Naive thymus-derived CD4-positive, alpha-beta T cell (primary cell): ENCODE measurements at regions of chr9 and their contacts with region 1.

Region 1: DNA sequence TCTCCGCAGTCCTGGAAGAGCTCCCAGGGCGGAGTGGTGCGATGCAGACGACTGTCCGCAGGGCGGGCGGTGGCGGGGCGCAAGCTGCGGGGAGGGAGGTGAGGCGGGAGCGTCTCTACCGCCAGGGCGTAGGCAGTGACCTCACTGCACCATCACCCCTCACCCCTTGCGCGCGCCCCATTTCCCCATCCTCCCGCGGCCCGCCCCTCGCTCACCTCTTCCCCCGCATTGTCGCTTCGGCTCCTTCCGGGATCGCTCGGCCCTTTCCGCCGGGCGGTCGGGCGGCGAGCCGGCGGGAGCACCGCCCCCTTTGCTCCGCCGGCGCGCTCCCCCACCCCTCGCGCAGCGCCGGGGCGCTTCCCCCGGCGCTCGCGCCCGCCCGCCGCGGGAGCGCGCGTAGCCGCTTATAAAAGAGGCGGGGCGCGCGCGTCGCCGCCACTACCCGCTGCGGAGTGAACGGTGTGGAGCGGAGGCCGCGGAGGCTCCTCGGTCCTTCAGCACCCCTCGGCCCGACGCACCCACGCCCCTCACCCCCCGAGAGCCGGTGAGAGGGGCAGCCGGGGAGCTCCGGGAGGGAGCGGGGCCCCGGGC is at the start of gene SPTAN1:
- DNase-seq: peak; percentile 92 to 98 (median 96)
- ATAC-seq: peak; percentile 94
- H3K4me3 ChIP-seq: peak within 1 kb of the TSS; percentile 84
- H3K4me3 Mint-ChIP-seq: peak within 1 kb of the TSS in 7 of 10 donors; percentile 85 to 94 (median 92)
- H3K27ac ChIP-seq: peak within 1 kb of the TSS; percentile 94
- H3K27ac Mint-ChIP-seq: peak within 1 kb of the TSS; percentile 92 to 98 (median 97)
- H3K4me1 ChIP-seq: peaks cover 44 to 45% of the 10 kb centered on the region in 2 donors
- H3K4me1 Mint-ChIP-seq: peaks cover 15 to 38% (median 34%) of the 10 kb centered on the region in 7 donors
- H3K27me3 ChIP-seq: no peaks in the 10 kb centered on the region
- H3K27me3 Mint-ChIP-seq: no peaks in the 10 kb centered on the region
- total RNA-seq, gene SPTAN1: 336 to 433 (median 375) TPM

Region 2: DNA sequence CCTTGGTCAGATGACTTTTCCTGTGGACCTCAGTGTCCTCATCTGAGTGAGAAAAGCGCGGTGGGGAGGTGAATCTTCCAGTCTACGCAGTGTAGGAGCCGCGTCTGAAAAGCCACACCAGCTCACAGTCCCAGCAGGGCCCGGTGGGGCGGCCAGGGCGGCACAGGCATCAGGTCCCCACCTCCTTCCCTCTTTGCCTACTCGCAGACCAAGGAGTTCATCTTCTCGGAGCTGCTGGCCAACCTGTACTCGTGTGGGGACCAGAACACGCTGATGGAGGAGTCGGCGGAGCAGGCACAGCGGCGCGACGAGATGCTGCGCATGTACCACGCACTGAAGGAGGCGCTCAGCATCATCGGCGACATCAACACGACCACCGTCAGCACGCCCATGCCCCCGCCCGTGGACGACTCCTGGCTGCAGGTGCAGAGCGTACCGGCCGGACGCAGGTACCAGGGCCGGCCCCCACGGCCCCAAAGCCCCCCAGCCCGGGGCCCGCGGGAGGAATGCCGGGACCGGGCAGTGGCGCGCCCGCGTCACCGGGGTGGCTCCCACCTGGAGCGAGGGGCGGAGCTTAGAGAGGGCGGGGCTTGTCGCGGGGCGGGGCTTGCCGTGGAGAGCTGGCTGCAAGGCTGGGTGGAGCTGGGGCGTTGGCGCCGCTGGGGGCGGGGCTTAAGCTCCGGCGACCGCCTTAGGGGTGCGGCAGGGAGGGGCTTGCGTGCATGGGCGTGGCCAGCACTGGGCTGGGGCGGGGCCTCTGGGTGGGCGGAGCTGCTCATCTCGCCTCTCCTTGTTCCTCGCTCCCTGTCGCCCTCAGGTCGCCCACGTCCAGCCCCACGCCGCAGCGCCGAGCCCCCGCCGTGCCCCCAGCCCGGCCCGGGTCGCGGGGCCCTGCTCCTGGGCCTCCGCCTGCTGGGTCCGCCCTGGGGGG is 302.1 kb before region 1 on chr9:
- CTCF ChIA-PET with region 1: no interaction called
- POLR2A ChIA-PET with region 1: interaction called, 6 read pairs
- intact Hi-C with region 1: loop called in 1 of 2 experiments (anchors 5 kb)
- DNase-seq: peak; percentile 96 to 100 (median 98)
- ATAC-seq: peak; percentile 98
- H3K4me3 ChIP-seq: peak overlapping the region; percentile 83
- H3K4me3 Mint-ChIP-seq: peak overlapping the region; percentile 79 to 93 (median 88)
- H3K27ac ChIP-seq: peak overlapping the region; percentile 72
- H3K27ac Mint-ChIP-seq: peak overlapping the region; percentile 60 to 97 (median 95)
- H3K4me1 ChIP-seq: peaks cover 7 to 9% of the 10 kb centered on the region in 2 donors
- H3K4me1 Mint-ChIP-seq: peaks cover 7 to 28% (median 17%) of the 10 kb centered on the region in 7 donors
- H3K27me3 ChIP-seq: no peaks in the 10 kb centered on the region
- H3K27me3 Mint-ChIP-seq: peaks cover 0 to 39% (median 6%) of the 10 kb centered on the region in 5 donors

Region 3: DNA sequence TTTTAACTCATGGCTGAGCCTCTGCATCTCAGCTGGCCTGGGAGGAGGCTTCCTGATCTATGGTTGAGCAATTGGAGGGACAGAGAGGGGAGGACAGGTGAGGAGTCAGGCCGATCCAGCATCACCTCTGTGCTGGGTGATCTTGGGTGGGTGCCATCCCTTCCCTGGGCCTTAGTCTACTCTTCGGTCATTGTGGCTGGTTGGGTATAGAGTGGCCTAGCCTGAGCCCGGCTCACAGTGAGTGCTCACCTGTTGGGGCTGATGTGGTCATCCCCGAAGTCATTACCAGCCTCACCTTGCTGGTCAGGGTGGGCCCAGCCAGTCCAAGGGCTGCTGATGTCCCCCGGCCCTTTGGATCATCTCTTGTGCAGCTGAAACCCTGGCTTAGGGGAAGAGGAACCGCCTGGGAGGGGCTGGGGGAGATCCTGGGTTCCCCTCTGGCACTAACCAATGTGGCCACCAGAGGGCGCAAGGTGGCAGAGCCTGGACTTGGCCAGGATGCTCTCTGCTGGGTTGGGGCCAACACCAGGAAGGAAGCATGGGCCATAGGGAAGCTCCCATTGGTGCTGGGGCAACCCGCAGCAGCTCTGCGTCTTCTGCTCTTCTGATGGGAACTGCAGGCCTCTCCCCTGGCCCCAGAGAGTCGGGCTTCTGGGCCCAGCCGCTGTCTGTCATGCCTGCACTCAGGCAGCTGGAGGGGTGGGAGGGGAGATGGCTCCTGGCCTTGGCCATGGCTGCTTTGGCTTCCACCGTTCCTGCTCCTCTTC is 113.7 kb before region 1 on chr9:
- CTCF ChIA-PET with region 1: no interaction called
- POLR2A ChIA-PET with region 1: no interaction called
- intact Hi-C with region 1: loop called in 1 of 2 experiments (anchors 2 kb)
- DNase-seq: peak; percentile 40 to 86 (median 70)
- ATAC-seq: peak; percentile 97
- H3K4me3 ChIP-seq: no peak overlapping the region
- H3K4me3 Mint-ChIP-seq: no peak overlapping the region
- H3K27ac ChIP-seq: no peak overlapping the region
- H3K27ac Mint-ChIP-seq: no peak overlapping the region
- H3K4me1 ChIP-seq: no peaks in the 10 kb centered on the region
- H3K4me1 Mint-ChIP-seq: peaks cover 0 to 6% (median 4%) of the 10 kb centered on the region in 7 donors
- H3K27me3 ChIP-seq: no peaks in the 10 kb centered on the region
- H3K27me3 Mint-ChIP-seq: no peaks in the 10 kb centered on the region

Region 4: GRCh38 chr9:128565578-128565977 is 13.3 kb after region 1 on chr9:
- CTCF ChIA-PET with region 1: interaction called, 3 read pairs
- POLR2A ChIA-PET with region 1: interaction called, 35 read pairs
- intact Hi-C with region 1: no loop called
- DNase-seq: no peak
- ATAC-seq: no peak
- H3K4me3 ChIP-seq: no peak overlapping the region
- H3K4me3 Mint-ChIP-seq: no peak overlapping the region
- H3K27ac ChIP-seq: no peak overlapping the region
- H3K27ac Mint-ChIP-seq: peak overlapping the region in 3 of 9 donors; percentile 40 to 58 (median 48)
- H3K4me1 ChIP-seq: no peaks in the 10 kb centered on the region
- H3K4me1 Mint-ChIP-seq: peaks cover 14 to 47% (median 33%) of the 10 kb centered on the region in 7 donors
- H3K27me3 ChIP-seq: no peaks in the 10 kb centered on the region
- H3K27me3 Mint-ChIP-seq: no peaks in the 10 kb centered on the region

Region 5: DNA sequence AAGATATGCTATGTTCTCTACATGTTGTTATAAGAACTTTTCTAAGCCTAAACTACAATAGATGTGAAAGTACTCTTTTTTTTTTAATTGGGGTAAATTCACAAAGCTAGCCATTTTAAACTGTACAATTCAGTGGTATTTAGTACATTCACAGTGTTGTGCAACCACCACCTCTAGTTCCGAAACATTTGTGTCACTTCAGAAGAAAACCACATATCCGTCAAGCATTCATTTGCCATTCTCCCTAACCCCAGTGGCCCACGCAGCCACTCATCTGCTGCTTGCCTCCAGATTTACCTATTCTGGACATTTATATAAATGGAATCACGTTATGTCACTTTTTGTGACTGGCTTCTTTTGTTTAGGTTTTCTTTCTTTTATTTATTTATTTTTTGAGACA is 43.2 kb after region 1 on chr9:
- CTCF ChIA-PET with region 1: no interaction called
- POLR2A ChIA-PET with region 1: no interaction called
- intact Hi-C with region 1: no loop called
- DNase-seq: no peak
- ATAC-seq: no peak
- H3K4me3 ChIP-seq: no peak overlapping the region
- H3K4me3 Mint-ChIP-seq: no peak overlapping the region
- H3K27ac ChIP-seq: no peak overlapping the region
- H3K27ac Mint-ChIP-seq: no peak overlapping the region
- H3K4me1 ChIP-seq: no peaks in the 10 kb centered on the region
- H3K4me1 Mint-ChIP-seq: no peaks in the 10 kb centered on the region
- H3K27me3 ChIP-seq: no peaks in the 10 kb centered on the region
- H3K27me3 Mint-ChIP-seq: no peaks in the 10 kb centered on the region

Region 6: DNA sequence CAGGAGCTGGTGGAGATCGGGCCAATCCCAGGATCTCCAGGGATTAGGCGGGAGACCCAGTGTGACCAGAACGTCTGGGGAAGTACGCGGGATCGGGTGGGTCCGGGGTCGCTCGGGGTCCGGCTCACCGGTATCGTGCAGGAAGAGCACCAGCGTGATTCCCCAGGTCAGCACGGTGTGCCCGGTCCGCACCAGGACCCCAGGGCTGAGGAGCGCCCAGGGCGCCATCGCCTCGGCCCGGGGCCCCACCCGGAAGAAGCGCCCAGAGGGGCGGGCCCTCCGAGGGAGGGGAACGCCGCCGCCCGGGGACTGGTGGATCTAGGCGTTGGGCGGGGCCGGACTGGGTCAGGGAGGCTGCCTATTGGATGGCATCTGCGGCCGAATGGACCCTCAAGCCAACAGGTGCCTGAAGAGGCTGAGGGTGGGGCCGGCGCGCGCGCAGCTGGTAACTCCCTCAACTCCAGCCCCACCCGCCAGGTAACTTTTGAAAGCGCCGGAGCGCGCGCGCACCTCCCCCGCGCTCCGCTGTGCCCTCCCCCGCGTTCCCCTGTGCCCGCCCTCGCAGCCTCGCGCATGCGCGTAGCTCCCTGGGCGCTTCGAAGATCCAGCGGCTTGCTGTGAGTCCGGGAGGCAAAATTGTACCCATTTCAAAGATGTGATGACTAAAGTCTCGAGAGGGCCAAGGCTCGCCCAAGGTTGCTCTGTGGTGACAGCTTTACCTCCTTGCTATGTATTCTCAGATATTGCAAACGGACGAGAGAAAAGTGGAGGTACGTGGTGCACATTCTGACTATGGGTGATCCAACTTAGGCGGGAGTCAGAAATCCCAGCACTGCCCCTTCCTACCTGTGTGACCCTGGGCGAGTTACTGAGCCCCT is 171.9 kb after region 1 on chr9 and contains the start of gene ZDHHC12:
- CTCF ChIA-PET with region 1: no interaction called
- POLR2A ChIA-PET with region 1: interaction called, 6 read pairs
- intact Hi-C with region 1: loop called in 1 of 2 experiments (anchors 1 kb)
- DNase-seq: peak; percentile 96 to 99 (median 99)
- ATAC-seq: peak; percentile 97
- H3K4me3 ChIP-seq: peak within 1 kb of the TSS; percentile 97
- H3K4me3 Mint-ChIP-seq: peak within 1 kb of the TSS; percentile 85 to 97 (median 94)
- H3K27ac ChIP-seq: peak within 1 kb of the TSS; percentile 89
- H3K27ac Mint-ChIP-seq: peak within 1 kb of the TSS; percentile 85 to 96 (median 94)
- H3K4me1 ChIP-seq: peaks cover 13 to 29% of the 10 kb centered on the region in 2 donors
- H3K4me1 Mint-ChIP-seq: peaks cover 23 to 46% (median 39%) of the 10 kb centered on the region in 7 donors
- H3K27me3 ChIP-seq: no peaks in the 10 kb centered on the region
- H3K27me3 Mint-ChIP-seq: no peaks in the 10 kb centered on the region
- total RNA-seq, gene ZDHHC12: 21.2 to 70.3 (median 25.7) TPM

Region 7: DNA sequence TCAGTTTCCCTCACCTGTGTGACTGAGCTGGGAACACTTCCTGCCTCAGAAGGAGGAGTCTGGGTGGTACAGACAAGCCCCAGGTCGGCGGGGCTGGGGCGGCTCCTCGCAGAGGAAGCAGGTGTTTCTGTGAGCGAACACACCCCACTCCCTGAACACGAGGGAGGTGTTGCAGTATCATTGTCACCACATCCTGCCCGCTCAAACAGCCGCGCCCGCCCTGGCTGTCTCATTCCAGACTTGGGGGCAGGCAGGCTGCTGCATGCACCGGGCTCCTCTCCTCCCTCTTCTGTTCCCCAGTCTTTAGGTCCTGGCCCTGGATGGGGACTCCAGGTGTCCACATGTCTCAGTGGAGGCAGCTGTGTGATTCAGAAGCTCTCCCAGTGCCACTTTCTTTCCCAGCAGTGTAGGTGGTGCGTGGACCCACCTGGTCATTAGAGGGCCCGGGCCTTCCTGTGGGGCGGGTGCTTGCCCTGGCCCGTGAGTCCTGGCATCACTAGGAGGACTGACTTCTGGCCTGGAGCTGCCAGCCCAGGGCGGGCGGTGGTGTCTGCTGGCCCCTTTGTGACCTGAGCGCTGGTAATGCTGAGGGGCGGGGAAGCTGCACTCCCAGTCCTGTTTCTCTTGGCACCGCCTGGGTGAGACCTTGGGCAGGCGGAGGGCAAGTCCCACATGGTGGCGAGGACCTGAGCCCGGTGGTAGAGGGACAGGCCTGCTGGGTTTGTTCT is 350.3 kb after region 1 on chr9:
- CTCF ChIA-PET with region 1: no interaction called
- POLR2A ChIA-PET with region 1: no interaction called
- intact Hi-C with region 1: loop called in 1 of 2 experiments (anchors 5 kb)
- DNase-seq: peak; percentile 61 to 93 (median 90)
- ATAC-seq: peak; percentile 95
- H3K4me3 ChIP-seq: peak overlapping the region; percentile 55
- H3K4me3 Mint-ChIP-seq: peak overlapping the region; percentile 76 to 87 (median 84)
- H3K27ac ChIP-seq: peak overlapping the region; percentile 89
- H3K27ac Mint-ChIP-seq: peak overlapping the region; percentile 85 to 98 (median 96)
- H3K4me1 ChIP-seq: peaks cover 64 to 65% of the 10 kb centered on the region in 2 donors
- H3K4me1 Mint-ChIP-seq: peaks cover 32 to 84% (median 73%) of the 10 kb centered on the region in 7 donors
- H3K27me3 ChIP-seq: no peaks in the 10 kb centered on the region
- H3K27me3 Mint-ChIP-seq: no peaks in the 10 kb centered on the region

Region 8: GRCh38 chr9:129368434-129368978 is 816.3 kb after region 1 on chr9:
- CTCF ChIA-PET with region 1: no interaction called
- POLR2A ChIA-PET with region 1: no interaction called
- intact Hi-C with region 1: no loop called
- DNase-seq: no peak
- ATAC-seq: no peak
- H3K4me3 ChIP-seq: no peak overlapping the region
- H3K4me3 Mint-ChIP-seq: no peak overlapping the region
- H3K27ac ChIP-seq: no peak overlapping the region
- H3K27ac Mint-ChIP-seq: no peak overlapping the region
- H3K4me1 ChIP-seq: no peaks in the 10 kb centered on the region
- H3K4me1 Mint-ChIP-seq: peaks cover 0 to 2% (median 0%) of the 10 kb centered on the region in 7 donors
- H3K27me3 ChIP-seq: no peaks in the 10 kb centered on the region
- H3K27me3 Mint-ChIP-seq: peaks cover 0 to 15% (median 0%) of the 10 kb centered on the region in 5 donors